Activated naive CD4-positive, alpha-beta T cell treated with anti-CD3 and anti-CD28 coated beads, Interleukin-2, amount 10 ng/mL, durations not matched to agents 7 days and 5 days (primary cell): ENCODE measurements at regions of chr12 and their contacts with region 1.

Region 1: DNA sequence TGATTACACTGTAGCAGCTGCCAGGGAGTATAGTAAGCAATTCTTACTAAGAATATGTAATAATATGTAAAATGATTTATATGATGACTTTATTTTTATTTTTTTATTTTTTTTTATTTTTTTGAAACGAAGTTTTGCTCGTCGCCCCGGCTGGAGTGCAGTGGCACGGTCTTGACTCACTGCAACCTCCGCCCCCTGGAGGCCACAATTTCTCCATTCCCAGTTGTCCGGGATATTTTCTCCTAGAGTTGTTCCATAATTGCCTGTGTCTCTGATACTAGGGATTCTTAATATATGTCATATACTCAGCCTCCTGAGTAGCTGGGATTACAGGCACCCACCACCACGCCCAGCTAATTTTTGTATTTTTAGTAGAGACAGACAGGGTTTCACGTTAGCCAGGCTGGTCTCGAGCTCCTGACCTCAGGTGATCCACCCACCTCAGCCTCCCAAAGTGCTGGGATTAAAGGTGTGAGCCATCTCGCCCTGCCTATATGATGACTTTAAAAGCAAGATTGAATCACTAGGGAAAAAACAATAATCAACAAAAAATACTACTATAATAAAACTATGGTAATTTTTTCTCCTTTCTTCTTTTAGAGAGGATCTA is 12.2 kb upstream of the ITPR2 start:
- DNase-seq: peak; percentile 27
- H3K4me3 Mint-ChIP-seq: no peak overlapping the region
- H3K27ac Mint-ChIP-seq: no peak overlapping the region
- H3K4me1 Mint-ChIP-seq: peaks cover 17% of the 10 kb centered on the region
- H3K27me3 Mint-ChIP-seq: peaks cover 15% of the 10 kb centered on the region

Region 2: DNA sequence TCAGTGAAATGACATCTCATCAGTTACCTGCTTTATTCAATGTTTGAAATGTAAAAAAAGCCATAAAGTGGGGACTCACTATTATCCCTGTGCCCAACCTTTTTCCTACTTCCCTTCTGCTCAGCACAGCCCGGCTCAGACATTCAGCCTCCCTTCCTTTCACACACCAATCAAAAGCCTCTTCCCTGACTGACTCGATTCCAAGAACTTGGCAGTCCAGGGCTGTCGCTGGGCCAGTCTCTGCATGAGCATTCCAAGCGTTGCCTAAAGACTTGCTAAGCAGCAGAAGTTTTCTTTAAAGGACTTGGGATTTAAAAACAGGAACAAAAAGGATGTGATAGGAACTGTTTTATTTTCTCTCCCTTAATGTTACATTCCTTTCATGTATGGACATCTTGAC is 34.8 kb before region 1 on chr12:
- CTCF ChIA-PET with region 1: no interaction called
- DNase-seq: no peak
- H3K4me3 Mint-ChIP-seq: no peak overlapping the region
- H3K27ac Mint-ChIP-seq: no peak overlapping the region
- H3K4me1 Mint-ChIP-seq: peaks cover 8% of the 10 kb centered on the region
- H3K27me3 Mint-ChIP-seq: no peaks in the 10 kb centered on the region

Region 3: DNA sequence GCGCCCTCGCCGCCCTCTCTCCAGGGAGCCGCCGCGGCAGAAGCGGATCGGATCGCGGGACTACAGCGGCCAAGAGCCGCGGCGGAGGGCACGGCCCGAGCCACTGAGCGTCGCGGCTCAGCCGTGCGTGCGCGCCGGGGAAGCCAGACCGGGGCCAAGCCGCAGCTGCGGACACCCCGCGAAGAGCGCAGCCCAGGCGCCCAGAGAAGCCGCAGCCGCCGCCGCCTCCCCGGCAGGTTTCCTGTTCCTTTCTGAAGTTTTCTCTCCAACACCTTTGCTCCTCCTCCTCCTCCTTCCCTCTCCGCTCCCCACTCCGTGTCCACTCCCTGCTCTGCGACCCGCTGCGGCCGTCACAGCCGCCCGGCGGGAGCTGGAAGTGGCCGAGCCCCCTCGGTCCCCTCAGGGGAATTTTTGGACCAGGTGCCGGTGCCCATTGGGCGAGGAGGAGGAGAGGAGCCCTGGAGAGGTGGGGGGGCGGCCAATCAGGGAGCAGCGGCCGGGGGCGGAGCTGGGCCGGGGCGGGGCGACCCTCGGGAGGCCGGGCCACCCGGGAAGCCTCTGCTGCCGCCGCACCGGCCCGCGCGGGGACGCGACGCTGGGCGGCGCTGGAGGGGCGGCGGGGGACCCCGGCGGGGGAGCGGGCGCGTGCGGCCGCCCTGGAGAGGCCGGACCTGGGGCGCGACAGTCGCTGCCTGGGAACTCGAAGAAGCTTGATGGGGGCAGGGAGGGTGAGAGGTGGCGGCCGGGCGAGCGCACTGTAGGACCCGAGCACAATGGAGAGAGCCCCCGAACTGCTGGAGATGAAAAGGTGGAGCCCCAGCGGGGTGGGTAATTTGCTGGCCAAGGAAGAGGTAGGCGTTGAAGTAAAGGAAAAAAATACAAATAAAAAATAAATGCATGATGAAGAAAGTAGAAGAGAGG is 12.1 kb before region 1 on chr12 and contains the start of gene ITPR2:
- CTCF ChIA-PET with region 1: interaction called, 12 read pairs
- DNase-seq: peak; percentile 95
- H3K4me3 Mint-ChIP-seq: peak within 1 kb of the TSS; percentile 98
- H3K27ac Mint-ChIP-seq: peak within 1 kb of the TSS; percentile 98
- H3K4me1 Mint-ChIP-seq: peaks cover 36% of the 10 kb centered on the region
- H3K27me3 Mint-ChIP-seq: peaks cover 4% of the 10 kb centered on the region

Region 4: DNA sequence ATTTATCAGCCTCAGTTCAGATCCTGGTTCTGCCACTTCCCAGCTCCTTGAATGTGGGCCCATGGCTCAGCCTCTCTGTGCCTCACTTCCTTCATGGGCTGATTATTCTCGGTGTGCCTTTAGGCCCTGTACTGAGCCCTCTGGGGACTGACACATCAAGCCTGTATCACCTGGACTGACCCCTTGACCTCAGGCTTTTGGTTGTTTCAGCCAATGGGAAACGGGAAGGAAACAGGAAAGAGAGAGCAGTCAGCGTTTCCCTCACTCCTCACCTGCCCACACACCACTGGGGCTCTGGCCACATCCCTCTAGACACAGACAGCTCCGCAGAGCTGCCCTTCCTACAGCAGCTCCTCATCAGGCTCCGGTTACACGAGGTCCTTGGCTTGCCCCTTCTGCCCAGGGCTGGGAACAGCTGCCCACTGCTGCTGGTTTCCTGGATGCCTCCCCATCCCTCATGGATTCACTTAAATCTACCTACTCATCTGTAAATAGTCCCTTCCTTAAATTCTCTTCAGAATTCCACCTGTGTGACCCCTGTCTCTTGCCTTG is 24.8 kb after region 1 on chr12:
- CTCF ChIA-PET with region 1: no interaction called
- DNase-seq: no peak
- H3K4me3 Mint-ChIP-seq: no peak overlapping the region
- H3K27ac Mint-ChIP-seq: no peak overlapping the region
- H3K4me1 Mint-ChIP-seq: peaks cover 20% of the 10 kb centered on the region
- H3K27me3 Mint-ChIP-seq: peaks cover 22% of the 10 kb centered on the region

Region 5: GRCh38 chr12:27277846-27278260 is 432.7 kb after region 1 on chr12:
- CTCF ChIA-PET with region 1: no interaction called
- DNase-seq: no peak
- H3K4me3 Mint-ChIP-seq: no peak overlapping the region
- H3K27ac Mint-ChIP-seq: no peak overlapping the region
- H3K4me1 Mint-ChIP-seq: peaks cover 10% of the 10 kb centered on the region
- H3K27me3 Mint-ChIP-seq: no peaks in the 10 kb centered on the region